ENCODE measurements at regions of chr5 and their contacts with region 1.

Region 1: GRCh38 chr5:40879163-40879942 is 29.9 kb upstream of the C7 start:
- DNase-seq: no peak
- ATAC-seq: peak in 1 of 8 donors; percentile 33
- H3K4me3 ChIP-seq: no peak overlapping the region
- H3K27ac ChIP-seq: no peak overlapping the region
- H3K4me1 ChIP-seq: peaks cover 0 to 3% (median 0%) of the 10 kb centered on the region in 9 donors
- H3K27me3 ChIP-seq: no peaks in the 10 kb centered on the region
- CTCF ChIP-seq: peak; percentile 26 to 75 (median 66)

Region 2: DNA sequence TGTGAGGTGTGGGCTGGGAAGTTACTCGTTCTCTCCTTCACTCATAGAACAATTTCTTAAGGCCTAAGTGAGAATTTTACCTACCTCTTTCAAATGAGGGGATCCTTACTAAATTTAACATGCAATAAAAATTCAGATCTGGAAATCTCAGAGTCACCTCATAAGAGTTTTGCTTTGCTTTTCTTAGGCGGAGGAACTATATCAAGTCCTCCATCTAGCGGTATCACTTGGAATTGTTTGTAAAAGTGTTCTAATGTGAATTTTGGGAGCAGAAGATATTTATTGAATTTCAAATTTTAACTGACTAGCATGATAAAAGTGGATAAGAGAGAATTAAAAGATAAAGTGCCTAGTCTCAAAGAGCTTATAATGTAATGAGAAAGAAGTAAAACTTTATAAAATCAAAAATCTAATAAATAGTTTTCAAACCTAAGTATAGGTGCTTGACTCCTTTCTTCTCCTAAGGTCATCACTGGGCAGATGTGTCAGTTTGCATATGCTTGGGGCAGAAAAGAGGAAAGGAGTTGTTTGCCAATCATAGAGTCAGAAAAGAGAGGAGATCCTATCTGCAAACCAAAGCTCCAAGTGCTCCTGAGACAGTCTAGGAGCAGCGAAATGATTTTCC is 1308.8 kb before region 1 on chr5:
- intact Hi-C with region 1: loop called in 2 of 10 experiments (anchors 5 to 10 kb)
- DNase-seq: no peak
- ATAC-seq: no peak
- H3K4me3 ChIP-seq: no peak overlapping the region
- H3K27ac ChIP-seq: no peak overlapping the region
- H3K4me1 ChIP-seq: peaks cover 0 to 8% (median 0%) of the 10 kb centered on the region in 9 donors
- H3K27me3 ChIP-seq: peaks cover 0 to 13% (median 0%) of the 10 kb centered on the region in 7 donors
- CTCF ChIP-seq: peak; percentile 42 to 78 (median 65)

Region 3: GRCh38 chr5:39578887-39579497 is 1300.4 kb before region 1 on chr5:
- intact Hi-C with region 1: loop called in 5 of 10 experiments (anchors 5 to 10 kb)
- DNase-seq: no peak
- ATAC-seq: no peak
- H3K4me3 ChIP-seq: no peak overlapping the region
- H3K27ac ChIP-seq: no peak overlapping the region
- H3K4me1 ChIP-seq: peaks cover 0 to 13% (median 9%) of the 10 kb centered on the region in 9 donors
- H3K27me3 ChIP-seq: peaks cover 0 to 5% (median 0%) of the 10 kb centered on the region in 7 donors
- CTCF ChIP-seq: peak; percentile 59 to 82 (median 75)

Region 4: GRCh38 chr5:39714036-39714698 is 1165.2 kb before region 1 on chr5:
- intact Hi-C with region 1: loop called in 2 of 10 experiments (anchors 10 kb)
- DNase-seq: peak in 1 of 2 donors; percentile 7
- ATAC-seq: peak in 2 of 8 donors; percentile 55 to 59
- H3K4me3 ChIP-seq: no peak overlapping the region
- H3K27ac ChIP-seq: no peak overlapping the region
- H3K4me1 ChIP-seq: no peaks in the 10 kb centered on the region
- H3K27me3 ChIP-seq: no peaks in the 10 kb centered on the region
- CTCF ChIP-seq: peak; percentile 15 to 73 (median 61)

Region 5: DNA sequence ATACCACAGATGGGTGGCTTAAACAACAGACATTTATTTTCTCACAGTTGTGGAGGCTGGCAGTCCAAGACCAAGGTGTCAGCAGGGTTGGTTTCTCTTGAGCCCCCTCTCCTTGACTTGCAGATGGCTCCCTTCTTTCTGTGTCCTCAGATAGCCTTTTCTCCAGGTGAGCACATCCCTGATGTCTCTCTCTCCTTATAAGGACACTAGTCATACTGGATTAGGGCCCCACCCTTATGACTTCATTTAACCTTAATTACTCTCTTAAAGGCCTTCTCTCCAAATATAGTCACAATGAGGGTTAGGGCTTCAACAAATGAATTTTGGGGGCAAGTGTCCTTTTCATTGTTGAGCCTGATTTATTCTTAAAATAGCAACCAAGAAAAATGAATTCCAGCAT is 184.9 kb before region 1 on chr5:
- intact Hi-C with region 1: loop called in 1 of 10 experiments (anchors 5 kb)
- DNase-seq: no peak
- ATAC-seq: no peak
- H3K4me3 ChIP-seq: no peak overlapping the region
- H3K27ac ChIP-seq: no peak overlapping the region
- H3K4me1 ChIP-seq: peaks cover 0 to 17% (median 10%) of the 10 kb centered on the region in 9 donors
- H3K27me3 ChIP-seq: no peaks in the 10 kb centered on the region
- CTCF ChIP-seq: no peak

Region 6: GRCh38 chr5:40755407-40756365 is 123.7 kb before region 1 on chr5 and contains the start of gene TTC33:
- intact Hi-C with region 1: loop called in 9 of 10 experiments (anchors 1 to 10 kb)
- DNase-seq: peak; percentile 94 to 96
- ATAC-seq: peak; percentile 98 to 99 (median 98)
- H3K4me3 ChIP-seq: peak within 1 kb of the TSS; percentile 65 to 98 (median 86)
- H3K27ac ChIP-seq: peak within 1 kb of the TSS; percentile 70 to 94 (median 89)
- H3K4me1 ChIP-seq: peaks cover 0 to 24% (median 17%) of the 10 kb centered on the region in 9 donors
- H3K27me3 ChIP-seq: no peaks in the 10 kb centered on the region
- CTCF ChIP-seq: peak; percentile 39 to 89 (median 72)
- total RNA-seq, gene TTC33: 12.9 to 20.1 (median 17.9) TPM

Region 7: DNA sequence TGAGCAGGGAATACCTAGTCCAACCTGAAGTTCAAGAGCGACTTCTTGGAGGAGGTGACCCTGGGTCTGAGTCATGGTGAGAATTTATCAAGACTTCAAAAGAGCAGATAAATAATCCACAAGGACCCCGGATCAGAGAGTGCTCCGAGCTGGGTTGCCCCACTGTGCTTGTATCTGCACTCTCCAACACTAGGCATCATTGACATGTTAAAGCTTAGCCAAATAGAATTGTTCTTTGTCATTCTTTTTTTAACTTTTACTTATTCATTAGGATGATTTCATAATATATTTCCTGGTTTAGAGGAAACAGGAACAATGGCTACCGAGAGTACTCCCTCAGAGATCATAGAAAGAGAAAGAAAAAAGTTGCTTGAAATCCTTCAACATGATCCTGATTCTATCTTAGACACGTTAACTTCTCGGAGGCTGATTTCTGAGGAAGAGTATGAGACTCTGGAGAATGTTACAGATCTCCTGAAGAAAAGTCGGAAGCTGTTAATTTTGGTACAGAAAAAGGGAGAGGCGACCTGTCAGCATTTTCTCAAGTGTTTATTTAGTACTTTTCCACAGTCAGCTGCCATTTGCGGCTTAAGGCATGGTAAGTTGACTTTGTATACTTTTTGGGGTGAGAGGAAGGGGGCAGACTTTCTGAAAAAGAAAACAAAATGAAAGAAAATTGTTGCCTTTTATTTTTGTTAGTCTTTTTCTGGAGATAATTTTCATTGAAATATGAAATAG is 38.1 kb before region 1 on chr5 and contains the start of gene CARD6:
- intact Hi-C with region 1: loop called in 2 of 10 experiments (anchors 5 kb)
- DNase-seq: no peak
- ATAC-seq: peak; percentile 52 to 73 (median 64)
- H3K4me3 ChIP-seq: peak within 1 kb of the TSS; percentile 31 to 58 (median 51)
- H3K27ac ChIP-seq: peak within 1 kb of the TSS; percentile 57 to 93 (median 78)
- H3K4me1 ChIP-seq: peaks cover 0 to 26% (median 21%) of the 10 kb centered on the region in 9 donors
- H3K27me3 ChIP-seq: no peaks in the 10 kb centered on the region
- CTCF ChIP-seq: peak in 3 of 9 donors; percentile 18 to 26 (median 24)
- total RNA-seq, gene CARD6: 4.4 to 9.1 (median 5.4) TPM

Region 8: DNA sequence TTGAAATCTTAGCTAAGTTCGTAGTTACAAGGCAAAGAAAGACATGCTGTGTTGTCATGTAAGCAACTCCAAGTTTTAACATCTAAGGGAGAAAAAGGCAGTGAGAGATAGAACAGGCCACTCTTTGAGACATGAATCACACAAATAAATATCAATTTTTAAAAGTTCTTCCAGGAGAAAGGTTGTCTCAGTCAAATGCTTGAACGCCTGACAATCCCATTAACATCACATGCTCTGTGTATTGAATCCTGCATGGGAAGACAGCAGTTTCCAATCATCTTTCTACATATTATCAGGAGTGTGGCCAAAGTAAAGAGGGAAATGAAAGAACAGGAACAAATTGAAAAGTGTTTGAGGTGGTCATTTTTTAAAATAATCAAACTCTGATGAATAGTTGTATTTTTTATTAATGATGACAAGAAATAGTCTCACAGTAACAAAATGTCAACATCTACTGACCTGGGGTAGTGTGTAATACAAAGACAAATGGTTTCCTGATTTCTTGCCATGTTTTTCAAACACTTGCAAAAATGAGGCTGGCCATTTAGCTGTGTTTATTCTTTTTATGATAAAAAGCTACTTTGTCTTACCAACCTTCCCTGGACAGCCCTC is 340.4 kb after region 1 on chr5:
- intact Hi-C with region 1: no loop called
- DNase-seq: no peak
- ATAC-seq: peak in 3 of 8 donors; percentile 37 to 57 (median 53)
- H3K4me3 ChIP-seq: no peak overlapping the region
- H3K27ac ChIP-seq: peak overlapping the region in 8 of 10 donors; percentile 6 to 55 (median 46)
- H3K4me1 ChIP-seq: peaks cover 0 to 20% (median 8%) of the 10 kb centered on the region in 9 donors
- H3K27me3 ChIP-seq: no peaks in the 10 kb centered on the region
- CTCF ChIP-seq: no peak

Region 9: DNA sequence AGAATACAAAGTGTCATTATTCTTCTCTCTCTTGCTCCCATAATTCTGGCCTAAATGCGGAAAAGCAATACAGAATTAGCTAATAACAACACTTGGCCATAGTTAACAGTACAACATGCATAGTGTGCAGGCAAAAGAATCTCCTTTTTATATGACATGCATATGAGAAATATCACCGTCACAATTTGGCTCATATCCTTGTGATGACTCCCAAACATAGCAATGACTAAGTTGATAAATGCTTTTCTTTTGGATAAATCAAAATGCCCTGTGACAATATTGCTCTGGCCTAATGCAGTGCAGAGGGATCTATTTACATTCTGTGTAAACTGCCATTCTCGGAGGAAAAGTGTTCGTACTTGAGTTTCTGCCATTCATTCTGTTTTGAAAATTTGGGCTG is 1422.0 kb after region 1 on chr5:
- intact Hi-C with region 1: no loop called
- DNase-seq: no peak
- ATAC-seq: no peak
- H3K4me3 ChIP-seq: no peak overlapping the region
- H3K27ac ChIP-seq: no peak overlapping the region
- H3K4me1 ChIP-seq: no peaks in the 10 kb centered on the region
- H3K27me3 ChIP-seq: no peaks in the 10 kb centered on the region
- CTCF ChIP-seq: no peak